ENCODE measurements at regions of chr3 and their contacts with region 1.

Region 1: GRCh38 chr3:62785387-62785982 is 89.7 kb downstream of the CADPS start:
- DNase-seq: peak; percentile 5
- H3K27ac ChIP-seq: no peak overlapping the region
- CTCF ChIP-seq: no peak

Region 2: GRCh38 chr3:62467966-62468722 is 317.3 kb before region 1 on chr3:
- CTCF ChIA-PET with region 1: no interaction called
- POLR2A ChIA-PET with region 1: no interaction called
- DNase-seq: no peak
- H3K27ac ChIP-seq: no peak overlapping the region
- CTCF ChIP-seq: no peak

Region 3: DNA sequence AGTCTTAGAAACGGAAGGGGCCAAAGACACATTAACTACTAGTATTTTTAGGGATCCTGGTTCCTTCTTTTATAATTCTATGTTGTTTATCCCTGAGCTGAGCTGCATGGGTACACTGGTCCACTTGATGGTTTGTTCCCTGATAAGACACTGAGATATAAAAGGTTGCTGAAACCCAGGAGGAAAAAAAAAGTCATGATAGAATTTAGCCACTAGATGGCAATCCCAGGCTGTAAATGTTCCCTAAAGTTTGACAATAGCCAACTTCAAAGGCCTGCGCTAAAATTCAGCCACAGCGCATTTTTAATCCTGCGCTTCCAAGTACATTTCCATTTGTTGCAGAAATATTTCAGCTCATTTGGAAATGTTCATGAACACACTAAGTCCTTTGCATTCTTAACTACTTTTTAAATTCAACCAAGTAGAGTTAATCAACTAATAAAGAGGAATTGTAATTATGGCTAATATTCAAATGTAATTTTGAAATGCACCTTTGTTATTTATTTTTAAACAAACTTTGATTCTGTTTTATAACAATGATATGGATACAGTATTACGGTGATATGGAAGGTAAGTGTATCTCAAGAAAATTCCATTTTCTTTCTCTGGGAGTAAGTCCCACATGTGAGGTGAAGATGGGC is 162.8 kb before region 1 on chr3:
- CTCF ChIA-PET with region 1: no interaction called
- POLR2A ChIA-PET with region 1: no interaction called
- DNase-seq: peak; percentile 32
- H3K27ac ChIP-seq: no peak overlapping the region
- CTCF ChIP-seq: peak; percentile 66

Region 4: DNA sequence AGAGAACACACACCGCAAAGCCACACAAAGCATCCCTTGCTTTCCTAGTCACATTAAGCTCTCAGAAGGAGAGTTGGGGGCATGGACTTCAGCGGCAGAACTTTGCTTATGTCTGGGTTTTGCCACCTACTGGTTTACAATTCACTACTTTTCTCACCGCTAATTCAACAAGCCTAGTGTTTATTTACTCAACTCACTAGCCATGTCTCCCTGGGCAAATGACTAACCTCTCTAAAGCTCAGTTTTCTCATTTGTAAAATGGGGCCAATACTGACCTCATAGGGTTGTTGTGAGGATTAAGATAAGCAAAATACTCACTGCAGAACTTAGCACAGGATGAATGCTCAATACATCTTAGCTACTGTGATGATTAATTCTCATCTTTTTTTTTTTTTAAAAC is 16.6 kb before region 1 on chr3:
- CTCF ChIA-PET with region 1: no interaction called
- POLR2A ChIA-PET with region 1: no interaction called
- DNase-seq: no peak
- H3K27ac ChIP-seq: no peak overlapping the region
- CTCF ChIP-seq: no peak

Region 5: DNA sequence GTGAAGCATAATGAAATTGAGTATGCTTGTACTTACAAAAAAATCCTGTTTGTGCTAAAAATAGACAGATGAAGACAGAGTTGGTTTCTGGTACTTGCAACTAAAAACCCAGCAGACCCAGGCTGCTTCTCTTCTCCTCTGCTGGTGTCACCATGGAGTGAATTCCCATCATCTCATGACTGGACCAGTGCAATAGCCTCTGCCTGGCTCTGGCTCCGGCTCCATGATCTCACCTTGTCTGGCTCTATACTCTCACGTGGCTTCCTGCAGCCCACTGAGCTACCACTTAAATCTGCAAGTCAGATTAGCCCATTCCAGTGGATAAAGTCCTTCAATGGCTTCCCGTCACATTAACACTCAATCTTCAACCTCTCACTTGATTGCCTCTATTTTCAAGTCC is 219.0 kb after region 1 on chr3:
- CTCF ChIA-PET with region 1: no interaction called
- POLR2A ChIA-PET with region 1: no interaction called
- DNase-seq: no peak
- H3K27ac ChIP-seq: no peak overlapping the region
- CTCF ChIP-seq: no peak

Region 6: DNA sequence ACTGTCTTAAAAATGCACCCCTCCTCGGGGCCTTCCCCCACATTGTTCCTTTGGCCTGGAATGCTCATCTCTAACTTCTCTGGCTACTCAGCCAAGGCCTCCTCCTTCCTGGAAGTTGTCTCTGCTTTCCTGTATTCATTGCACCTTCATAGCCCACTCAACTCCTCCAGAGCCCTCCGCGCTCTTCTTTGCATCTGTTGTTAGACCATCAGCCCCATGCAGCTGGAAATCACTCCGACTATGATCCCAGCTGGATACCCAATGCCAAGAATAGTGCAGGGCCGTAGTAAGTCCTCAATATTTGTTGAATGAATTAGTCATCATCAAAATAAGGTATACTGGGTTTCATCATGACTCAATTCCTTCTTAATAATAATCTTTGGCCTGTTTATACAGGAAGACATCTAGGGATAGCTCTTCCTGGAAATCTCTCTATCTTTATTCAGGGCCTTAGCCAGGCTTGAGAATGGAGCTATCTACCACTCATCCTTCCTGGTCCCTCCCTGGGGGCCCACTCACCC is 605.3 kb after region 1 on chr3:
- CTCF ChIA-PET with region 1: no interaction called
- POLR2A ChIA-PET with region 1: interaction called, 12 read pairs
- DNase-seq: peak; percentile 1
- H3K27ac ChIP-seq: no peak overlapping the region
- CTCF ChIP-seq: no peak